CD4-positive, alpha-beta memory T cell (primary cell): ENCODE measurements at regions of chr1 and their contacts with region 1.

Region 1: GRCh38 chr1:88891318-88891950 is at the start of gene GTF2B:
- DNase-seq: peak; percentile 92 to 96 (median 95)
- H3K4me3 ChIP-seq: peak within 1 kb of the TSS; percentile 84 to 90
- H3K4me3 Mint-ChIP-seq: peak within 1 kb of the TSS; percentile 90 to 99 (median 98)
- H3K27ac ChIP-seq: peak within 1 kb of the TSS; percentile 94
- H3K27ac Mint-ChIP-seq: peak within 1 kb of the TSS; percentile 94 to 99 (median 98)
- H3K4me1 ChIP-seq: peaks cover 42% of the 10 kb centered on the region
- H3K4me1 Mint-ChIP-seq: peaks cover 33 to 50% (median 42%) of the 10 kb centered on the region in 4 donors
- H3K27me3 ChIP-seq: no peaks in the 10 kb centered on the region
- H3K27me3 Mint-ChIP-seq: peaks cover 0 to 2% of the 10 kb centered on the region in 2 donors
- total RNA-seq, gene GTF2B: 43.9 to 48.3 TPM

Region 2: GRCh38 chr1:88683541-88684481 is 207.6 kb before region 1 on chr1 and contains the start of gene PKN2:
- CTCF ChIA-PET with region 1: interaction called, 4 read pairs
- POLR2A ChIA-PET with region 1: interaction called, 37 read pairs
- intact Hi-C with region 1: loop called (anchors 1 kb)
- DNase-seq: peak; percentile 97 to 98 (median 98)
- H3K4me3 ChIP-seq: peak within 1 kb of the TSS; percentile 43 to 82
- H3K4me3 Mint-ChIP-seq: peak within 1 kb of the TSS; percentile 95 to 99 (median 97)
- H3K27ac ChIP-seq: peak within 1 kb of the TSS; percentile 85
- H3K27ac Mint-ChIP-seq: peak within 1 kb of the TSS; percentile 96 to 99 (median 98)
- H3K4me1 ChIP-seq: peaks cover 39% of the 10 kb centered on the region
- H3K4me1 Mint-ChIP-seq: peaks cover 15 to 58% (median 24%) of the 10 kb centered on the region in 4 donors
- H3K27me3 ChIP-seq: no peaks in the 10 kb centered on the region
- H3K27me3 Mint-ChIP-seq: no peaks in the 10 kb centered on the region
- total RNA-seq, gene PKN2: 38.6 to 42.0 TPM

Region 3: GRCh38 chr1:88877382-88877825 is 14.0 kb before region 1 on chr1:
- CTCF ChIA-PET with region 1: interaction called, 78 read pairs
- POLR2A ChIA-PET with region 1: interaction called, 10 read pairs
- intact Hi-C with region 1: no loop called
- DNase-seq: peak; percentile 19 to 41 (median 30)
- H3K4me3 ChIP-seq: no peak overlapping the region
- H3K4me3 Mint-ChIP-seq: peak overlapping the region in 3 of 8 donors; percentile 8 to 59 (median 39)
- H3K27ac ChIP-seq: no peak overlapping the region
- H3K27ac Mint-ChIP-seq: peak overlapping the region in 3 of 7 donors; percentile 33 to 70 (median 35)
- H3K4me1 ChIP-seq: peaks cover 36% of the 10 kb centered on the region
- H3K4me1 Mint-ChIP-seq: peaks cover 32 to 67% (median 46%) of the 10 kb centered on the region in 4 donors
- H3K27me3 ChIP-seq: no peaks in the 10 kb centered on the region
- H3K27me3 Mint-ChIP-seq: no peaks in the 10 kb centered on the region

Region 4: GRCh38 chr1:88990426-88990825 is 99.0 kb after region 1 on chr1:
- CTCF ChIA-PET with region 1: no interaction called
- POLR2A ChIA-PET with region 1: interaction called, 8 read pairs
- intact Hi-C with region 1: loop called (anchors 1 kb)
- DNase-seq: no peak
- H3K4me3 ChIP-seq: no peak overlapping the region
- H3K4me3 Mint-ChIP-seq: peak overlapping the region in 7 of 8 donors; percentile 2 to 54 (median 15)
- H3K27ac ChIP-seq: peak overlapping the region; percentile 97
- H3K27ac Mint-ChIP-seq: peak overlapping the region in 5 of 7 donors; percentile 19 to 90 (median 71)
- H3K4me1 ChIP-seq: peaks cover 54% of the 10 kb centered on the region
- H3K4me1 Mint-ChIP-seq: peaks cover 32 to 59% (median 41%) of the 10 kb centered on the region in 4 donors
- H3K27me3 ChIP-seq: no peaks in the 10 kb centered on the region
- H3K27me3 Mint-ChIP-seq: no peaks in the 10 kb centered on the region